ENCODE measurements at regions of chr13 and their contacts with region 1.

Region 1: GRCh38 chr13:24671386-24672107 is 8.7 kb upstream of the ATP12A start:
- DNase-seq: peak; percentile 75
- H3K4me3 Mint-ChIP-seq: no peak overlapping the region
- H3K27ac Mint-ChIP-seq: no peak overlapping the region
- H3K4me1 Mint-ChIP-seq: peaks cover 14% of the 10 kb centered on the region
- H3K27me3 Mint-ChIP-seq: peaks cover 23% of the 10 kb centered on the region

Region 2: GRCh38 chr13:24574847-24575246 is 96.7 kb before region 1 on chr13:
- intact Hi-C with region 1: loop called (anchors 2 kb)
- DNase-seq: no peak
- H3K4me3 Mint-ChIP-seq: no peak overlapping the region
- H3K27ac Mint-ChIP-seq: no peak overlapping the region
- H3K4me1 Mint-ChIP-seq: peaks cover 13% of the 10 kb centered on the region
- H3K27me3 Mint-ChIP-seq: peaks cover 18% of the 10 kb centered on the region

Region 3: GRCh38 chr13:24605923-24606372 is 65.6 kb before region 1 on chr13:
- intact Hi-C with region 1: loop called (anchors 1 kb)
- DNase-seq: peak; percentile 62
- H3K4me3 Mint-ChIP-seq: no peak overlapping the region
- H3K27ac Mint-ChIP-seq: peak overlapping the region; percentile 34
- H3K4me1 Mint-ChIP-seq: peaks cover 12% of the 10 kb centered on the region
- H3K27me3 Mint-ChIP-seq: no peaks in the 10 kb centered on the region

Region 4: DNA sequence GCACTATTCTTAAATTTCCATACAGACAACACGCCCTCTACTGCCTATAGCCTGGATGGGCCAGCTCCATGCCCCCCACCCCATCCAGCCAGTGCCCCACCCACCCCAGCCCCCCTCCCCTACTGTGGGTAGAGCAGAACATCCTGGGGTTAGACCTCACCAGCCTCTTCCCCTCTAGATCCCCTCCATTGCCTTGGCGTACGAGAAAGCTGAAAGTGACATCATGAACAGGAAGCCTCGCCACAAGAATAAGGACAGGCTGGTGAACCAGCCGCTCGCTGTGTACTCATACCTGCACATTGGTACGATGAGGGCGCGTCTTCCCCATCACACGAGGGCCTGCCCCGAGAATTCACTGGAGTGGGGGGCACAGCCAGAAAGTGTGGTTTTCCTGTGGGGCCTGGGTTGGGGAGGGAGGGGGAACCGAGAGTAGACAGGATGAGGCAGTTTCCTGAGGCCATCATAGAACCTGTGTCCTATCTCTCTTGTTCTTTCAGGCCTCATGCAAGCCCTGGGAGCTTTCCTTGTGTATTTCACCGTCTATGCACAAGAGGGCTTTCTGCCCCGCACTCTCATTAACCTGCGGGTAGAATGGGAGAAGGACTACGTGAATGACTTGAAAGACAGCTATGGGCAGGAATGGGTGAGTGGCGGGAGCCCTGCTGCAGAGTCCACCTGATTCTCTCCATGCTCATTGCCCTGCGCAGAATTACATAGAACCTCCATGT is 37.8 kb after region 1 on chr13:
- intact Hi-C with region 1: no loop called
- DNase-seq: peak; percentile 89
- H3K4me3 Mint-ChIP-seq: peak overlapping the region; percentile 71
- H3K27ac Mint-ChIP-seq: peak overlapping the region; percentile 64
- H3K4me1 Mint-ChIP-seq: peaks cover 24% of the 10 kb centered on the region
- H3K27me3 Mint-ChIP-seq: peaks cover 6% of the 10 kb centered on the region

Measured in activated CD4-positive, alpha-beta T cell treated with anti-CD3 and anti-CD28 coated beads, Interleukin-2, amount 10 ng/mL, durations not matched to agents 24 days and 14 days (primary cell).